ENCODE measurements at regions of chr14 and their contacts with region 1.

Region 1: DNA sequence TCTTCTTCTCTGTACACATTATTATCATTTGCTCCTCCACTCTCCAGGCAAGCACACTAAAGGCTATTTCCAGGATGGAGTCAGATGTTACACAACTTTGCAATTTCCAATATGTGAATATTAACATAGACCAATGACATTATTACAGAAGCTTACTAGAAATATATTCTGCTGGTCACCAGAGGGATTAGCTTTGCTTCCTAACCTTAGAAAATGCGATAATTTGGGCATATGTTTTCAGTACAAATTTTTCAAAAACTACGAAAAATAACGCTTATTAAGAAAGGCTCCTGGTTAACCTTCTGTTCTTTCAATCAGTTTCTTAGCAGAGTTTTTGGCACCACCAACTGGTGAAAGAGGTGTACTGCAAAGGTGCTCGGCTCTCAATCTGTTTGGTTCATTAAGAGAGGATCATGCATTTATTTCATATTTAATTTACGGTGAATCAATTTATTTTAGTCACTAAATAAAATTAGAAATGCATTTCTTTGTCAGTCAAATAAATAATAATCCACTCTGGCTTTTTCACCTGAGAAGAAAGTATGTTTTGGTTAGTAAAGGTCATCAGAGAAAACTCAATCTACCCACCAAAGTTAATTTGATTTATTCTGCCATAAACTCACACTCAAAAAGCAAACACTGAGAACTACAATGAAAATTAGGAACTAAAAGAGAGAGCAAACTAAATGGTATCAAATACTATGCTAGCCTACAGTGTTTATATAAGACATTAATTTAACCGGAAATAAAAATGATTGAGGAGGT is 39.2 kb downstream of the EFCAB11 start:
- DNase-seq: peak; percentile 34
- ATAC-seq: peak in 1 of 2 donors; percentile 21

Region 2: DNA sequence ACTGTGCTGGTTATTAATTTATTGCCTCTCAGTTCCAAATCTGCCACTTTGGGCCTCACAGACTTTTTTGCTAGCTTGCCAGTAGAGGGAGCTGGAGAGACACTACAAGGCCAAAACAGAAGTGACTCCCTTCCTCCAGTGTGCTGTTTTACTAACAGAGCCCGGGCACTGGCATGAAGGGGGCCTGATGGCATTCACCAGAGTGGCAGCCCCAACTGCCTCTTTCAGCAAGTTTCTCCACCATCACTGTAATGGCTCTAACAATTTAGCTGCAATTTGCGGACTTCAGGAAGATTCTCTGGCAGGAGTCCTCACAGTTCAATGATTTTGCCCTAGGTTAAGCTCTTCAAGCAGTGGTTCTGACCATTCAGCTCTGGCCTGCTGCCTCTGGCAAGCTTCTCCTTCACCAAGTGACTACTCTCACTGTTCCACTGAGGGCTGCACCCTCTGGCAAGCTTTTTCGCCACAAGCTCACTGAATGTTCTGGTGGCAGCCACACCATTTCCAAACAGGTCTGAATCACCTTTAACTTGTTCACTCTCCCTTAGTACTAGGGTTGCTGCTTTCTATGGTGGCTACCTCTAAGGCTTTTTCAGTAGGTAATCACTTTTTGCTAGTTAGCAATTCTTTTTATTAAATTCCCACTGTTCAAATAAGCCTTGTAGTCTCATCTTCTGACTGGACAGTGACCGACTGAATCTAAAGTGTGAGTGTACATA is 1247.6 kb before region 1 on chr14:
- intact Hi-C with region 1: loop called in 1 of 2 experiments (anchors 10 kb)
- DNase-seq: no peak
- ATAC-seq: peak; percentile 79 to 82

Region 3: GRCh38 chr14:89027097-89027740 is 888.1 kb before region 1 on chr14:
- intact Hi-C with region 1: loop called (anchors 5 kb)
- DNase-seq: peak; percentile 53
- ATAC-seq: peak; percentile 92 to 93

Region 4: DNA sequence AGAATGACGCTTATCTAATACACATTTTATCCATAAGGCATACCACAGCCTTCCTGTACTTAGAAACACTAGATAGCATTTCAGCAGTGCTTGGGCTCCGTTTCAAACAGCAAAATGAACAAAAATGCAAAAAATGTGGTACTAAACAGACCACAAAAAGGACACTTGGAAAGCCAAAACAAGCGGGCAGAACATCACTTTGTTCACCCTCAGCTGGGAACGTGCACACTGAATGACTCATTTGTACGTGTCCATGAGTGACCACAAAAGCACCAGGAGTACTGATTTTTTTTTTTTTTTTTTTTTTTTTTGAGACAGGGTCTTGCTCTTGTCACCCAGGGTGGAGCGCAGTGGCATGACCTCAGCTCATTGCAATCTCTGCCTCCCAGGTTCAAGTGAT is 489.4 kb before region 1 on chr14:
- intact Hi-C with region 1: loop called in 1 of 2 experiments (anchors 10 kb)
- DNase-seq: no peak
- ATAC-seq: peak in 1 of 2 donors; percentile 25

Measured in left cardiac atrium (tissue), 4 donors.